Ascending aorta (tissue), 2 donors: ENCODE measurements at regions of chr19 and their contacts with region 1.

Region 1: DNA sequence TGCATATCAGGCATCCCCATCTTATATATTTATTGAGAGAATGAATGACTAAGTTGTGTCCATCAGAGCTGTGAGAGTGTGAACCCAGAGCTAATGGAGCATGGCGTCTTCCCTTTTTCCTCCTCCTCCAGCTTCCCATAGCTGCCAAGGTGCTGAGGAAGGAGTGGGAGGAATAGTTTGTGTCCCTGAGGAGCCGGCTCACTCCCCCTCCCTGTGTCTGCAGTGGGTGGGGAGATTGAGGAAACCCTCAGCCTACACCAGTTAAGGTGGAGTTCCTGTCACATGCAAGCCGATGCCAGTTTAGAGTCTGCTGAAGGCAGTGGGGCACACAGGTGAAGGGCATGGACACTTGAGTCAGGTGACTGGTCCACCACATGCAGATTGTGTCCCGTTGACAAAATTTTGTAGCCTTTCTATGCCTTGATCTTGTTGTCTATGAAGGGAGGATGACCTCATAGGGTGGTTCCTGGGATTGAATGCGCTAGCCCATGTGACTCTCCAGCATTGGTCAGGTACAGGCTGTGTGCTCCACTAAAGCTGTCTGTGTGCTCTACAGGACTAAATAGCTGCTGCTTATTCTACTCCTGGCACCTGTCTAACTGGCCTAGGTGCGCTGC is 47.6 kb upstream of the GPI start:
- DNase-seq: no peak
- H3K4me3 ChIP-seq: no peak overlapping the region
- H3K27ac ChIP-seq: peak overlapping the region; percentile 50 to 87
- H3K4me1 ChIP-seq: peaks cover 8 to 37% of the 10 kb centered on the region in 2 donors
- H3K27me3 ChIP-seq: no peaks in the 10 kb centered on the region
- CTCF ChIP-seq: no peak

Region 2: DNA sequence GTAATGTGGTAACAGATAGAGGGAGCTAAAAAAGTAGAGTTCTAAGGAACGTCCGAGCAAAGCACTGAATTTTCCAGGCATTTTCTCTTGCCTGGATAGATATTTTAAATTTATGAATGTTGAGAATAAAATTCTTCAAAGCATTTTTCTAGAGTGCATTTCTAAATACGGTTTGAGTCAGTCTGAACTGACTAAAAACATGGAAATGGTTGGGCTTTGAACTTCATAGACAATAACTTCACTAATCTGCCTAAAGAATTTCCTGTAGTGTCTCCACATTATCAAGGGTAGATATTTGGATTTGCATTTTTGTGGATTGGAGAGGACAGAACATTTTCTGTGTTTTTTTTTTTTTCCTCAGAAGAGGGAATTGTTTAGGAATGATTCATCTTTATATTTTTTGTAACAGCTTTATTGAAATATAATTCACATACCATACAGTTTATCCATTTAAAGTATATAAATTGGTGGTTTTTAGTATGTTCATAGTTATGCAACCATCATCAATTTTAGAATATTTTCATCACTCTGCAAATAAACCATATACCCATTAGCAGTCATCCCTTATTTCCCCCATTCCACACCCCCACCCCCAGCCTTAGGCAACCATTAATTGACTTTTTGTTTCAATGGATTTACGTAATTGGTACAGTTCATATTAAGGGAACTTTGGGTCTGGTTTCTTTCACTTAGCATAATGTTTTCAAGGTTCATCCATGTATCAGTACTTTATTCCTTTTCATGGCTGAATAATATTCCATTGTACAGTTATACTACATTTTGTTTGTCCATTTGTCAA is 42.4 kb before region 1 on chr19:
- intact Hi-C with region 1: loop called (anchors 5 kb)
- DNase-seq: no peak
- H3K4me3 ChIP-seq: peak overlapping the region; percentile 14 to 29
- H3K27ac ChIP-seq: peak overlapping the region; percentile 95
- H3K4me1 ChIP-seq: peaks cover 6 to 50% of the 10 kb centered on the region in 2 donors
- H3K27me3 ChIP-seq: no peaks in the 10 kb centered on the region
- CTCF ChIP-seq: no peak